ENCODE measurements at regions of chr16 and their contacts with region 1.

Region 1: DNA sequence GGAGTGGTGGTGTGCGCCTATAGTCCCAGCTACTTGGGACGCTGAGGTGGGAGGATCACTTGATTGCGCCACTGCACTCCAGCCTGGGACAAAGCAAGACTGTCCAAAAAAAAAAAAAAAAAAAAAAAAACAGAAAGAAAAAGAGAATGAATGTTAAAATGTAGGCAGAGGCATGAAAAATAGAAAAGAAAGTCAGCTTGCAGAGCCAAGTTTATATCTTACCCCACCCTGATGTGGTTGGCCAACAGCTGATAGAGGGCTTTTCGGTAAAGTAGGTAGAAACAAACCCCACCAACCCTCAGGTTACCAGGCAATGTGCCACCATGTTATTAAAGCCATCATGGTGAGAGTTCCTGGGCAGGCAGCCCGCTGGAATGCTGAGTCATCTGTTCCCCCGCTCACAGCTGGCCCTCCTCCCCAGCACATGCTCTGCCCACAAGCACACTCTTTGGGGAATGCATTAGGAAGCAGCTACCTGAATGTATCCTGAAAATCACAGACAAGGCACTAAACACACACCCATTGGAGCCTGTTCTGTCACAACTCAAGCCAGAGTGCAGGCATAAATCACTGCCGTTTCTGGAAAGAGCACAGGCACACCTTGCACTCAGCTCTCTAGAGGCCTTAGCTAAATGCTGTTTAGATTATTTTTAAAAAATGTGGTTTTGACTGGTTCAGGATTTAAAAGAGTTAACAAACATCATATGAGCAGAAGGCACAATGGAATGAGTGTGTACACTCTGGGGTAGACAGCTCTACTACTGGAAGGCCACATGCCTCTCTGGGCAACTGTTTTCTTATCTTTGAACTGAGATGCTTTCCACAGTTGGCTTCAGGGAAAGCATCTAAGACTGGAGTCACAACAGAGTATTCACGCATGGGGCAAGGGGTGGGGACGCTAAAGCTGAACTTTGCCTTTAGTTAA is 128.5 kb downstream of the PARN start:
- DNase-seq: peak; percentile 50
- ATAC-seq: peak; percentile 35
- H3K4me3 ChIP-seq: no peak overlapping the region
- H3K27ac ChIP-seq: peak overlapping the region; percentile 75
- H3K4me1 ChIP-seq: peaks cover 61% of the 10 kb centered on the region
- H3K27me3 ChIP-seq: no peaks in the 10 kb centered on the region
- CTCF ChIP-seq: no peak
- EP300 ChIP-seq: no peak; a peak in 1 of 4 replicates
- POLR2A ChIP-seq: no peak
- RAD21 ChIP-seq: no peak

Region 2: GRCh38 chr16:14405611-14406537 is 95.7 kb before region 1 on chr16:
- CTCF ChIA-PET with region 1: no interaction called
- POLR2A ChIA-PET with region 1: no interaction called
- RAD21 ChIA-PET with region 1: interaction called, 3 read pairs
- SMC1A ChIA-PET with region 1: interaction called, 3 read pairs
- in situ Hi-C with region 1: no loop called
- intact Hi-C with region 1: loop called (anchors 2 kb)
- DNase-seq: peak; percentile 77
- ATAC-seq: peak; percentile 92
- H3K4me3 ChIP-seq: no peak overlapping the region
- H3K27ac ChIP-seq: peak overlapping the region; percentile 90
- H3K4me1 ChIP-seq: peaks cover 29% of the 10 kb centered on the region
- H3K27me3 ChIP-seq: no peaks in the 10 kb centered on the region
- CTCF ChIP-seq: no peak
- EP300 ChIP-seq: peak; percentile 77 to 78; a peak in 3 of 4 replicates
- POLR2A ChIP-seq: peak; percentile 53; the same call in 1 of the 2 replicates
- RAD21 ChIP-seq: no peak

Region 3: GRCh38 chr16:14456793-14457481 is 44.7 kb before region 1 on chr16:
- CTCF ChIA-PET with region 1: interaction called, 4 read pairs
- POLR2A ChIA-PET with region 1: no interaction called
- RAD21 ChIA-PET with region 1: interaction called, 3 read pairs
- SMC1A ChIA-PET with region 1: interaction called, 13 read pairs
- in situ Hi-C with region 1: no loop called
- intact Hi-C with region 1: no loop called
- DNase-seq: no peak
- ATAC-seq: no peak
- H3K4me3 ChIP-seq: no peak overlapping the region
- H3K27ac ChIP-seq: no peak overlapping the region
- H3K4me1 ChIP-seq: no peaks in the 10 kb centered on the region
- H3K27me3 ChIP-seq: no peaks in the 10 kb centered on the region
- CTCF ChIP-seq: no peak
- EP300 ChIP-seq: no peak
- POLR2A ChIP-seq: no peak
- RAD21 ChIP-seq: no peak

Measured in GM12878 (cell line).